Panc1 (cell line): ENCODE measurements at regions of chr1 and their contacts with region 1.

Region 1: DNA sequence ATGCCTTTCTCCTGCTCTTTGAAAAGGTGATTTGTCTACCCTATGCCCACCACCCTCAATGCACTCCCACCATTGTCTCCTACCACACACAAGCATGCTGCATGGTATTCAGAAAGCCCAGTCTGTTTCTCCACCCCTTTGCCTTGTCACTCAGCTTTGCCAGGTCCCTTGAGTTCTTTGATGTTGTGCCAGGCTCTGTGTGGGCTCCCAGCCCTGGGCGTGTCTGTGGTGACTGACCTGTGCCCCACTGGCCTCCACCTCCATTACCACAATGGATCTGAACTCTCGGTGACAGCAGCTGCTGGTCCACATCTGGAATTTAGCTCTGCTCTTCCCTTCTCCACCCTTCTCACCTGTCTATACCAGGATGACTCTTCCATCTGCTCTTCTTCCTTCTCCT is 34.9 kb downstream of the ATP2B4 start:
- DNase-seq: no peak
- ATAC-seq: no peak
- H3K4me3 ChIP-seq: no peak overlapping the region
- H3K27ac ChIP-seq: no peak overlapping the region
- H3K4me1 ChIP-seq: no peaks in the 10 kb centered on the region
- H3K27me3 ChIP-seq: no peaks in the 10 kb centered on the region
- CTCF ChIP-seq: no peak

Region 2: GRCh38 chr1:202658769-202659168 is 1002.8 kb before region 1 on chr1:
- CTCF ChIA-PET with region 1: no interaction called
- POLR2A ChIA-PET with region 1: interaction called, 13 read pairs
- in situ Hi-C with region 1: no loop called
- intact Hi-C with region 1: no loop called
- DNase-seq: no peak
- ATAC-seq: no peak
- H3K4me3 ChIP-seq: no peak overlapping the region
- H3K27ac ChIP-seq: no peak overlapping the region
- H3K4me1 ChIP-seq: no peaks in the 10 kb centered on the region
- H3K27me3 ChIP-seq: peaks cover 25% of the 10 kb centered on the region
- CTCF ChIP-seq: no peak